AG04449 (cell line): ENCODE measurements at regions of chr3 and their contacts with region 1.

Region 1: GRCh38 chr3:127697551-127698240 is 24.9 kb downstream of the ABTB1 start:
- DNase-seq: no peak
- H3K4me3 ChIP-seq: peak overlapping the region; percentile 21; the same call in 1 of the 2 replicates
- CTCF ChIP-seq: no peak

Region 2: DNA sequence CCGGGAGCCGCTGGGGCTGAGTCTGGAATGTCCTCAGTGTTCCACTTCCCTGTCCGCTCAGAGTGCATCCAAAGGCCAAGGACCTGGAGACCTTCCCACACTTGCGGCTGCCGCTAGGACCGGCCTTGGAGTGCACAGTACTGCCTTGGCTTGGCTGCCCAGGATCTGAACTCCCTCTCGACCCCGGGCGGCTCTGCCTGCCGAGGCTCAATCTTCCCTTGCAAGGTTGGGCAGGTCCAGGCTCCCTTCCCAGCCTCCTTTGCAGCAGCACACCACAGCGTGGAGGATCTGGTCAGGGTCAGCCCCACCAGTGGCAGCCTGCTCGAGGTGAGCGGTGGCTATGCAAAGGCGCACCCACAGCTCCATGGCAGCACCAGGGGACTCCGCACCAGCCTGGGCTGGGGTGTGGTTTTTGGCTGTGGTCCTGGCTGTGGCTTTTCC is 645.6 kb before region 1 on chr3:
- CTCF ChIA-PET with region 1: no interaction called
- POLR2A ChIA-PET with region 1: no interaction called
- DNase-seq: no peak
- H3K4me3 ChIP-seq: no peak overlapping the region
- CTCF ChIP-seq: no peak

Region 3: GRCh38 chr3:127275287-127275781 is 422.4 kb before region 1 on chr3:
- CTCF ChIA-PET with region 1: no interaction called
- POLR2A ChIA-PET with region 1: no interaction called
- DNase-seq: no peak
- H3K4me3 ChIP-seq: no peak overlapping the region
- CTCF ChIP-seq: no peak

Region 4: DNA sequence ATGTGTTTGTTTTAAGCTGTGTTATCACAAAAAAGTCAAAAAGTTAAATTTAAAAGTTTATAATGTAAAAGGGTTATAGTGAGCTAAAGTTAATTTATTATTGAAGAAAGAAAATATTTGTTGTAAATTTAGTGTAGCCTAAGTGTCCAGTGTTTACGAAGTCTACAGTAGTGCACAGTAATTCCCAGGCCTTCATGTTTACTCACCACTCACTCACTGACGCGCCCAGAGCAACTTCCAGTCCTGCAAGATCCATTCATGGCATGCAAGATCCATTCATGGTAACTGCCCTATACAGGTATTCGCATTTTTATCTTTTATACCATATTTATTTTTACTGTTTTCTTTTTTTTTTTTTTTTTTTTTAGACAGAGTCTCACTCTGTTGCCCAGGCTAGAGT is 176.7 kb before region 1 on chr3:
- CTCF ChIA-PET with region 1: no interaction called
- POLR2A ChIA-PET with region 1: no interaction called
- DNase-seq: no peak
- H3K4me3 ChIP-seq: no peak overlapping the region
- CTCF ChIP-seq: no peak

Region 5: GRCh38 chr3:127710155-127710941 is 12.7 kb after region 1 on chr3:
- CTCF ChIA-PET with region 1: interaction called, 29 read pairs
- POLR2A ChIA-PET with region 1: no interaction called
- DNase-seq: no peak
- H3K4me3 ChIP-seq: no peak overlapping the region
- CTCF ChIP-seq: no peak

Region 6: DNA sequence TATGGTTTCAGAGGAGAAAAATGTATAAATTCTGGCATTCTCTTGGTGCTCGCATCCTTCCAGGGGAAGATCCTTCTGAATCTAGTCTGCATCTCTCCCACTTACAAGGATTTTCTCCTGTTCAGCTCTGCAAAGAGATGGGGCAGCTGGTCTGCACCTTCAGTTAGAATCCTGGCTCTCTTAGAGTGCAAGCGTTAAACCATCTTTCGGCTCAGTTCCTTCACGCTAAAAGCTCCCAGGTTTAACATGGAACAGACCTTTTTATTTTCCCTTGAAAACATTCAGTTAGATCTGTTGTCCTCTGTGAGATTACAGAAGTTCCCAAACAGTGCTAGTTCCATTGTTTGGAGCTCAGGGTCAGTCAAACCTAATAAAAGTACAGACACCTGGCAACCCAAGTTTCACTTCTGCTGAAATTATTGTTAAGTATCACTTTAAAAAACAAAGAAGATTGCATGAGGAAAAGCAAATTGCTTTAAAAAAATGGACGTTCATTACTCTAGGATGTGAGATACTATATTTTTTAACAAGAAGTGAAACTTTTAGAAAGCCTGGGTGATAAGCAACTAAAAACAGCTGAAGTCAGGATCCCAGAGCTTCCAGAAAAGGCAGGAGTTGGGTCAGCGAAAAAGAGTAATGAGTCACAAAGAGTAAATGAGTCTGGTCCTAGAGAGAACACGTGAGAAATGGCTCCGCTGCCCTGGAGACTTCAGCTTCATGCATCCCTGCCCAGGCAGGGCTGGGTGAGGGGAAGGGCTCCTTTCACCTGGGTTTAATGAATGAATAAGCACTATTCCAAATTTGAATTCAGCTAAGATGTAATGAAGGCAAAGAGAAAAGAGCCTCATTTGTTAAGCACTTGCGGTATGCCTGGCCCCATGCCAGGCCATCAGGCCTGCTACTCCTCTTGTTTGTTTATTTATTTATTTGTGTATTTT is 38.3 kb after region 1 on chr3:
- CTCF ChIA-PET with region 1: interaction called, 11 read pairs
- POLR2A ChIA-PET with region 1: no interaction called
- DNase-seq: no peak
- H3K4me3 ChIP-seq: no peak overlapping the region
- CTCF ChIP-seq: no peak

Region 7: DNA sequence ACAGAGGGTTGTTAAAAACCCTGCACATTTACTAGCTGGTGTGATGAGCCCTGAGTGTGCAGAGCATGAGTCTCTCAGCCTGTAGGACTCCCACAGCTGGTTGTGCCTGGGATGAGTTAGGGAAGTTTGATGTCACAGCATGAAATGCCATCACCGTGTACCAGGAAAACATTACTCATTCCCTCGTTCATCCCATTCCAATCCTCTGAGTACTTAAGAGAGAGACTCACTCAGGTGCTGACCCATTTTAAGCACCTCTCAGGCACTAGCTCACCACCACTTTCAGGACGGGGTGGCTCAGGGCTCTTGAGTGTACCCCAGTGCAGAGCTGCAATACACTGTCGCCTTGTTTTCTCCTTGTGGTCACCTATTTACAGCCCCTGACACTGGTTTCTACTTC is 105.9 kb after region 1 on chr3:
- CTCF ChIA-PET with region 1: interaction called, 10 read pairs
- POLR2A ChIA-PET with region 1: no interaction called
- DNase-seq: peak; percentile 76
- H3K4me3 ChIP-seq: no peak overlapping the region
- CTCF ChIP-seq: no peak

Region 8: GRCh38 chr3:127831723-127832172 is 134.1 kb after region 1 on chr3:
- CTCF ChIA-PET with region 1: interaction called, 24 read pairs
- POLR2A ChIA-PET with region 1: no interaction called
- DNase-seq: no peak
- H3K4me3 ChIP-seq: no peak overlapping the region
- CTCF ChIP-seq: peak; percentile 68

Region 9: GRCh38 chr3:128145337-128145736 is 447.6 kb after region 1 on chr3:
- CTCF ChIA-PET with region 1: no interaction called
- POLR2A ChIA-PET with region 1: no interaction called
- DNase-seq: no peak
- H3K4me3 ChIP-seq: no peak overlapping the region
- CTCF ChIP-seq: no peak